WTC11 (cell line): ENCODE measurements at regions of chr12 and their contacts with region 1.

Region 1: DNA sequence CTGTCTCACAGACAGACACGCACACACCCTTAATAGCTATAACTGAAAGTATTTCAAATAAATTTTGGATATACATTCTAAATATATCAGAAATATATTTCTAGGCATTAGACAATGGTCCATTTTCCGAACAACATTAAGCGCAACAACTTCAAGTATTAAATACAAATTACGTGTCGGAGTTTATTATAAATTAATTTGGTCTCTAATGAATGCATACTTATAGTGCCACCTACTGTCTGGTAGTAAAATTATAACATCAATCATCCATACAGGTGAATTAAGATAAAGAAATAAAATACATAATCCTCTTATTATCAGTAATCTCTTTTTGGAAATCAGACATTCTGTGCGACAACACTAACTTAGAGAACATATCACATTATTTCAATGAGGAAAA is 27.2 kb upstream of the CMAS start:
- DNase-seq: no peak
- ATAC-seq: no peak
- H3K4me3 Mint-ChIP-seq: no peak overlapping the region
- H3K27ac Mint-ChIP-seq: no peak overlapping the region
- H3K4me1 Mint-ChIP-seq: peaks cover 6% of the 10 kb centered on the region; the same call in 1 of the 2 replicates
- H3K27me3 Mint-ChIP-seq: no peaks in the 10 kb centered on the region
- CTCF ChIP-seq: no peak

Region 2: DNA sequence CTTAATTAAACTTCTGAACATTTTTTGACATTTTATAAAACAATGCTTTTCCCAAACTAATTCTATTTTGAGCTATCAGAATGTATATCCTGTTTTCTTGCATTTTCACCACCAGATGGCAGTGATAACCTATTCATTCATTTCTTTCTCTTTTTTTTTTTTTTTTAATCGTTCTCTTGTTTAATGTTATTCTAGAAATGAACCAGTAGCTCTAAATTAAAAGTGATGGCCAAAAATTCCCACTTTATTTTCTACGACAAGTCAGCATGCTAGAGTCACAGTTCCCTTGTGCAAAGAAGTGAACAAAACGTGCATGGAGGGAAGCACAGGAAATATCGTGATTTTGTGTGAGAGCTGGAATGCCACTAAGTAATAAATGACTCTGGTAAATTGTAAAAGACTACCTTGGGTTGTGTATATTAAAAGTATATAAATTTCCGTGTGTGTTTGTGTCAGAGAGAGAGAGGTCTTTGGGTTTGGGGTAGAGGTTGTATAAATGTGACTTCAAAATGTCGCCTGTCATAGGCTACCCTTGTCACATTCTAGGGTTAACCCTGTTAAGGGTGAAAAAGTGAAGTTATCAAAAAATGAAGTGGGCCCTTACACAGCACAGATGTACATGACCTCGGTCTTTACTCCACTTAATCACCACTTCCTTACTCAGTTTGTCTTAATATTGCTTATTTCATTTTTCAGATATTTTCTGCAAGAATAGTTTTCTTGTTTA is 320.8 kb before region 1 on chr12:
- CTCF ChIA-PET with region 1: interaction called, 11 read pairs
- POLR2A ChIA-PET with region 1: no interaction called
- DNase-seq: no peak
- ATAC-seq: no peak
- H3K4me3 Mint-ChIP-seq: no peak overlapping the region
- H3K27ac Mint-ChIP-seq: no peak overlapping the region
- H3K4me1 Mint-ChIP-seq: peaks cover 10% of the 10 kb centered on the region
- H3K27me3 Mint-ChIP-seq: no peaks in the 10 kb centered on the region
- CTCF ChIP-seq: no peak